ENCODE measurements at regions of chr20 and their contacts with region 1.

Region 1: GRCh38 chr20:37316116-37316774 is 26.8 kb downstream of the MANBAL start:
- DNase-seq: peak; percentile 90
- ATAC-seq: peak; percentile 87
- H3K4me3 ChIP-seq: peak overlapping the region in 4 of 5 experiments; percentile 15 to 45 (median 28)
- H3K4me3 Mint-ChIP-seq: peak overlapping the region; percentile 68
- H3K27ac ChIP-seq: peak overlapping the region; percentile 93 to 100
- H3K27ac Mint-ChIP-seq: peak overlapping the region; percentile 92
- H3K4me1 ChIP-seq: peaks cover 38 to 42% of the 10 kb centered on the region in 2 donors
- H3K4me1 Mint-ChIP-seq: peaks cover 56% of the 10 kb centered on the region
- H3K27me3 ChIP-seq: no peaks in the 10 kb centered on the region
- H3K27me3 Mint-ChIP-seq: no peaks in the 10 kb centered on the region
- CTCF ChIP-seq: no peak

Region 2: GRCh38 chr20:37270576-37271420 is 45.4 kb before region 1 on chr20:
- CTCF ChIA-PET with region 1: interaction called, 5 read pairs
- POLR2A ChIA-PET with region 1: interaction called, 4 read pairs
- intact Hi-C with region 1: loop called (anchors 5 kb)
- DNase-seq: peak; percentile 75
- ATAC-seq: peak; percentile 60
- H3K4me3 ChIP-seq: no peak overlapping the region
- H3K4me3 Mint-ChIP-seq: no peak overlapping the region
- H3K27ac ChIP-seq: peak overlapping the region; percentile 49 to 71
- H3K27ac Mint-ChIP-seq: peak overlapping the region; percentile 57
- H3K4me1 ChIP-seq: peaks cover 42 to 46% of the 10 kb centered on the region in 2 donors
- H3K4me1 Mint-ChIP-seq: peaks cover 43% of the 10 kb centered on the region
- H3K27me3 ChIP-seq: no peaks in the 10 kb centered on the region
- H3K27me3 Mint-ChIP-seq: no peaks in the 10 kb centered on the region
- CTCF ChIP-seq: no peak

Region 3: DNA sequence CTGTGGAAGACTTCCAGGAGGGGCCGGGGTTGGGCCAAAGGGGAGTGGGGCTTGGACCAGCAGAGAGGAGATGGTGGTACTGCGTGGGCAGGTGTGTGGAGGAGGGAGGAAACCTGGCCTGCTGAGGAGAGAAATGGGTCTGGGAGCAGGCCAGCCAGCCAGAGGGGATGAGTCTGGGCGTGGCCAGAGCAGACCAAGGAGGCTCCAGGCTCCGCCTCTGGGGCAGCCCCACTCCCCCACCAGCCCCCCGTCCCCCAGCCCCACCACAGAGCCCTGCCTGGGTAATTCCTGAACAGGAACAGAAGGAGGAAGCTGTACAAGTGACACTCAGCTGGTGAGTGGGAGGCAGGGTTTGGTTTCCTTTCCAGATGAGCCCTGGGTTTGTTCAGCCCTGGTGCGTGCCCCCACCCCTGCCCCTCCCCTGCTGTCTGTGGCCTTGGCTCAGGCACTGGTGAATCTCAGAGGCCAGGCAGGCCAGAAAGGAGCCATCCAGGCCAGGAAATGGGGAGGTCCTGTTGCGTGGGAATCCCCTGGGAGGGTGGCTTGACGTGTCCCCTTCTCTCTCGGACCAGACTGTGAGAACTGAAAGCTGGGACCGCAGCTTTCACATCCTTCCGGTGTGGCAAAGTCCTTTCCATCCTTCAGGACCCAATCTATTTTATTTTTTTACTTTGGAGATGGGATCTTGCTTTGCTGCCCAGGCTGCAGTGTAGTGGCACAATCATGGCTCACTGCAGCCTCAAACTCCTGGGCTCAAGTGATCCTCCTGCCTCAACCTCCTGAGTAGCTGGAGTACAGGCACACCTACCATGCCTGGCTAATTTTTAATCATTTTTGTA is 20.3 kb after region 1 on chr20:
- CTCF ChIA-PET with region 1: interaction called, 5 read pairs
- POLR2A ChIA-PET with region 1: no interaction called
- intact Hi-C with region 1: loop called (anchors 1 kb)
- DNase-seq: peak; percentile 81
- ATAC-seq: peak; percentile 79
- H3K4me3 ChIP-seq: peak overlapping the region in 3 of 5 experiments; percentile 27 to 44 (median 30)
- H3K4me3 Mint-ChIP-seq: peak overlapping the region; percentile 77
- H3K27ac ChIP-seq: peak overlapping the region; percentile 59 to 60
- H3K27ac Mint-ChIP-seq: peak overlapping the region; percentile 88
- H3K4me1 ChIP-seq: peaks cover 28 to 38% of the 10 kb centered on the region in 2 donors
- H3K4me1 Mint-ChIP-seq: peaks cover 32% of the 10 kb centered on the region
- H3K27me3 ChIP-seq: no peaks in the 10 kb centered on the region
- H3K27me3 Mint-ChIP-seq: no peaks in the 10 kb centered on the region
- CTCF ChIP-seq: no peak